ENCODE measurements at regions of chr1 and their contacts with region 1.

Region 1: DNA sequence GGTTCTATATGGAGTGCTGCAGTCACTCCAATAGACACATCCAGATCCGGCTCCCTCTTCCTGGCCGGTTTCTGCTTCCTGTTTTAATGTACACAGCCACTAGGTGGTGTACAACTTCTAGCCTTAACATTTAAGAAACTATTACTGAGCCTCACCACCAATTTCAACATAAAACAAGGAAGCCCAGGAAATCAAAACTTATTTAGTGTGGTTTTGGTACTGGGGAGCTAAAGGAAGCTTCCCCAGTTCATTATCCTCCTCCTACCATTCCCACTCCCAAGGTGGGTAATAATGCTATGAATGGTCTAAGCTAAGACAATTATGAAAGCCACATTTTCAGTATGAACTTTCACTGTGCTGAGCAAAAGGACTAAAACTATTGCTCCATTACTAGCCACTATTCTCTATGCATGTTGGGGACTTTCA is 25.5 kb upstream of the MTMR11 start:
- DNase-seq: peak in 34 of 42 donors; percentile 14 to 85 (median 64)

Region 2: DNA sequence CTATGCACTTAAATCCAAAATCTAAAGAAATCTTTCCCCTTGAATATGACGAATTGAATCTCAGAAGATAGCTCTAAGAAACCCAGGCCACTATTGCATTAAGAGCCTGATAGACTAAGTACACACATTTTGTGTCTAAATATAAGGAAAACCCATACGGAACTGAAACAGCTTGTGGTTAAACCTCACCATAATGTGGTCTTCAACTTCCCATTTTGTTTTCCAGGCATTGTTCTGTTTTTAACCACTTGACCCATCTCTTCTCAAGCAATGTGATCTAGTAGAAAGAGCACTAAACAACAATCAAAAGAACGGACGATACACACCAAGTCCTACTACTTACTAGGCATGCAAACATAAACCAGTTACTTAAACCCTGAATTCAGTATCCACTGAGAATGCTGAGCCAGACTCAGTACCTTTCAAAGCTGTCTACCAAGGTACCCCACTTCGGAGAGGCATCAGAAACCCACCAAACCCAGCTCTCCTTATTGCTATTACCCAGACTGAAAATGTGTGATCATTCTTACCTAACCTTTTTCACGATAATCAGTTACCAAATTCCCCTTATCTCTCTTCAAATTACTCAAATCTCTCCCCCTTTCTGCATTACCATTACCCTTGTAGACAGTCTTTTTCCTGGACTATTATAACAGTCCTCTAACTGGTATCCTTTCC is 35.6 kb after region 1 on chr1:
- intact Hi-C with region 1: loop called (anchors 5 kb)
- DNase-seq: no peak

Region 3: DNA sequence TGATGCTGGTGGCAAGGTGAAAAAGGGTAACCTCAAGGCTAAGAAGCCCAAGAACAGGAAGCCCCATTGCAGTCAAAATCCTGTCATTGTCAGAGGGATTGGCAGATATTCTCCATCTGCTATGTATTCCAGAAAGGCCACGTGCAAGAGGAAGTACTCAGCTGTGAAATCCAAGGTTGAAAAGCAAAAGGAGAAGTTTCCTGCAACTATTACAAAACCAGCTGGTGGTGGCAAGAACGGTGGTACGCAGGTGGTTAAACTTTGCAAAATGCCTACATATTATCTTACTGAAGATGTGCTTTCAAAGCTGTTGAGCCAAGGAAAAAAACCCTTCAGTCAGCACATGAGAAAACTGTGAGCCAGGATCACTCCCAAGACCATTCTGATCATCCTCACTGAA is 91.8 kb after region 1 on chr1:
- intact Hi-C with region 1: loop called (anchors 2 kb)
- DNase-seq: no peak

Region 4: GRCh38 chr1:150186789-150187559 is 224.8 kb after region 1 on chr1:
- intact Hi-C with region 1: loop called (anchors 10 kb)
- DNase-seq: peak in 1 of 42 donors; percentile 13